MCF 10A (cell line): ENCODE measurements at regions of chr2 and their contacts with region 1.

Region 1: GRCh38 chr2:18560031-18560796 is at the start of gene RDH14:
- DNase-seq: peak; percentile 93
- H3K4me3 Mint-ChIP-seq: peak within 1 kb of the TSS; percentile 91
- H3K27ac Mint-ChIP-seq: peak within 1 kb of the TSS; percentile 94
- H3K4me1 Mint-ChIP-seq: peaks cover 16% of the 10 kb centered on the region
- H3K27me3 Mint-ChIP-seq: no peaks in the 10 kb centered on the region
- CTCF ChIP-seq: no peak
- total RNA-seq, gene RDH14: 14.5 and 19.2 TPM in 2 replicates

Region 2: GRCh38 chr2:18491577-18491976 is 68.6 kb before region 1 on chr2:
- CTCF ChIA-PET with region 1: no interaction called
- POLR2A ChIA-PET with region 1: no interaction called
- intact Hi-C with region 1: no loop called
- DNase-seq: no peak
- H3K4me3 Mint-ChIP-seq: no peak overlapping the region
- H3K27ac Mint-ChIP-seq: no peak overlapping the region
- H3K4me1 Mint-ChIP-seq: peaks cover 6% of the 10 kb centered on the region
- H3K27me3 Mint-ChIP-seq: peaks cover 34% of the 10 kb centered on the region
- CTCF ChIP-seq: no peak

Region 3: GRCh38 chr2:18536100-18536499 is 24.1 kb before region 1 on chr2:
- CTCF ChIA-PET with region 1: no interaction called
- POLR2A ChIA-PET with region 1: interaction called, 15 read pairs
- intact Hi-C with region 1: no loop called
- DNase-seq: peak; percentile 47
- H3K4me3 Mint-ChIP-seq: peak overlapping the region; percentile 12
- H3K27ac Mint-ChIP-seq: peak overlapping the region; percentile 81
- H3K4me1 Mint-ChIP-seq: peaks cover 12% of the 10 kb centered on the region
- H3K27me3 Mint-ChIP-seq: no peaks in the 10 kb centered on the region
- CTCF ChIP-seq: no peak

Region 4: GRCh38 chr2:18719978-18720775 is 160.0 kb after region 1 on chr2:
- CTCF ChIA-PET with region 1: no interaction called
- POLR2A ChIA-PET with region 1: no interaction called
- intact Hi-C with region 1: loop called (anchors 10 kb)
- DNase-seq: peak; percentile 91
- H3K4me3 Mint-ChIP-seq: no peak overlapping the region
- H3K27ac Mint-ChIP-seq: no peak overlapping the region
- H3K4me1 Mint-ChIP-seq: peaks cover 18% of the 10 kb centered on the region
- H3K27me3 Mint-ChIP-seq: no peaks in the 10 kb centered on the region
- CTCF ChIP-seq: no peak

Region 5: GRCh38 chr2:19078709-19079108 is 518.5 kb after region 1 on chr2:
- CTCF ChIA-PET with region 1: no interaction called
- POLR2A ChIA-PET with region 1: no interaction called
- intact Hi-C with region 1: no loop called
- DNase-seq: no peak
- H3K4me3 Mint-ChIP-seq: no peak overlapping the region
- H3K27ac Mint-ChIP-seq: no peak overlapping the region
- H3K4me1 Mint-ChIP-seq: peaks cover 3% of the 10 kb centered on the region
- H3K27me3 Mint-ChIP-seq: no peaks in the 10 kb centered on the region
- CTCF ChIP-seq: no peak